Caco-2 (cell line): ENCODE measurements at regions of chr3 and their contacts with region 1.

Region 1: DNA sequence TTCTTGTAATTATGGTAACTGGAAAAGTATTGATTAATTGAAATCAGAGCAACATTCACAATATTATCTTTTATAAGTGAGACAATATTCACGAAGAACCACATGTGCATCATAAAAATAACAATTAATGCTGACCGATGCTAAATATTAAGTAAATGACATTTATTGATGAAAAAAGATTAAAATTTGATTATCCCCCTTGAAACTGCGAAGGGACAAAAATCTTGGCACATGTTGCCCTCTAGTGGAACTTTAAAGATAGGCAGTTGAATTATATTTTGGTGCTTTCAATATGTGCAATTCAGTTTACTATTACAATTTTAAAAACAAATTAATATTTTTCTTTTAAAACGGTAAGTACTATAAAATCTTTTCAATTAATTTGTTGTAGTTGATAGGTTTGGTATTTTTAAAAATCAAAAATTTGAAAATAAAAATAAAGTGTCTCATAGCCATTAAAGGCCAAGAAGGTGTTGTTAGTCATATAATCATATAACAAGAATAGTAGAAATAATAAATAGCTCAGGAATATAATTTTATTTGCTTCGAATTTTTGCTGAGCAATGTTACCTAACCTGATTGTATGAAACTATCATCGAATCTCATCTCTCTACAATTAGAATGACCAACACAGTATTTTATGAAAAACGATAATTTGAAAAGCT is 270.2 kb downstream of the ROBO1 start:
- DNase-seq: no peak
- H3K4me3 ChIP-seq: no peak overlapping the region
- H3K4me3 Mint-ChIP-seq: no peak overlapping the region
- H3K27ac Mint-ChIP-seq: no peak overlapping the region
- H3K4me1 ChIP-seq: no peaks in the 10 kb centered on the region
- H3K4me1 Mint-ChIP-seq: no peaks in the 10 kb centered on the region
- H3K27me3 ChIP-seq: no peaks in the 10 kb centered on the region
- H3K27me3 Mint-ChIP-seq: no peaks in the 10 kb centered on the region
- CTCF ChIP-seq: peak; percentile 55 to 58

Region 2: GRCh38 chr3:79086514-79086913 is 411.1 kb before region 1 on chr3:
- CTCF ChIA-PET with region 1: no interaction called
- POLR2A ChIA-PET with region 1: no interaction called
- intact Hi-C with region 1: loop called (anchors 5 kb)
- DNase-seq: peak; percentile 51 to 67
- H3K4me3 ChIP-seq: no peak overlapping the region
- H3K4me3 Mint-ChIP-seq: no peak overlapping the region
- H3K27ac Mint-ChIP-seq: no peak overlapping the region
- H3K4me1 ChIP-seq: no peaks in the 10 kb centered on the region
- H3K4me1 Mint-ChIP-seq: no peaks in the 10 kb centered on the region
- H3K27me3 ChIP-seq: no peaks in the 10 kb centered on the region
- H3K27me3 Mint-ChIP-seq: peaks cover 8% of the 10 kb centered on the region
- CTCF ChIP-seq: peak; percentile 50 to 78

Region 3: DNA sequence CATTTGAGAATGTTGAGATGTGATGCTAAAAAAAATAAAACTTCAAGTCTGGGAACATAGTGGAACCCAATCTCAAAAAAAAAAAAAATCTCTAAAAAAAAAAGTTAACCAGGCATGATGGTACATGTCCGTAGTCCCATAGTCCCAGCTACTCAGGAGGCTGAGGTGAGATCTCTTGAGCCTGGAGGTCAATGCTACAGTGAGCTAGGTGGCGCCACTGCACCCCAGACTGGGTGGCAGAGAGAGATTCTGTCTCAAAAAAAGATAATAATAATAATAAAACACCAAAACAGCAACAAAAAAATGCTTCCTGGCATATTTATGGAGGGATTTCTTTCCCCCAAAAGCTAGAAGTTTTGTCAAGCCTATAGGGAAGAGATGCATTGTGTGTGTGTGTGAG is 91.4 kb before region 1 on chr3:
- CTCF ChIA-PET with region 1: no interaction called
- POLR2A ChIA-PET with region 1: no interaction called
- intact Hi-C with region 1: loop called (anchors 5 kb)
- DNase-seq: no peak
- H3K4me3 ChIP-seq: no peak overlapping the region
- H3K4me3 Mint-ChIP-seq: no peak overlapping the region
- H3K27ac Mint-ChIP-seq: no peak overlapping the region
- H3K4me1 ChIP-seq: no peaks in the 10 kb centered on the region
- H3K4me1 Mint-ChIP-seq: no peaks in the 10 kb centered on the region
- H3K27me3 ChIP-seq: no peaks in the 10 kb centered on the region
- H3K27me3 Mint-ChIP-seq: no peaks in the 10 kb centered on the region
- CTCF ChIP-seq: no peak